Transverse colon (tissue), 4 donors: ENCODE measurements at regions of chr1 and their contacts with region 1.

Region 1: DNA sequence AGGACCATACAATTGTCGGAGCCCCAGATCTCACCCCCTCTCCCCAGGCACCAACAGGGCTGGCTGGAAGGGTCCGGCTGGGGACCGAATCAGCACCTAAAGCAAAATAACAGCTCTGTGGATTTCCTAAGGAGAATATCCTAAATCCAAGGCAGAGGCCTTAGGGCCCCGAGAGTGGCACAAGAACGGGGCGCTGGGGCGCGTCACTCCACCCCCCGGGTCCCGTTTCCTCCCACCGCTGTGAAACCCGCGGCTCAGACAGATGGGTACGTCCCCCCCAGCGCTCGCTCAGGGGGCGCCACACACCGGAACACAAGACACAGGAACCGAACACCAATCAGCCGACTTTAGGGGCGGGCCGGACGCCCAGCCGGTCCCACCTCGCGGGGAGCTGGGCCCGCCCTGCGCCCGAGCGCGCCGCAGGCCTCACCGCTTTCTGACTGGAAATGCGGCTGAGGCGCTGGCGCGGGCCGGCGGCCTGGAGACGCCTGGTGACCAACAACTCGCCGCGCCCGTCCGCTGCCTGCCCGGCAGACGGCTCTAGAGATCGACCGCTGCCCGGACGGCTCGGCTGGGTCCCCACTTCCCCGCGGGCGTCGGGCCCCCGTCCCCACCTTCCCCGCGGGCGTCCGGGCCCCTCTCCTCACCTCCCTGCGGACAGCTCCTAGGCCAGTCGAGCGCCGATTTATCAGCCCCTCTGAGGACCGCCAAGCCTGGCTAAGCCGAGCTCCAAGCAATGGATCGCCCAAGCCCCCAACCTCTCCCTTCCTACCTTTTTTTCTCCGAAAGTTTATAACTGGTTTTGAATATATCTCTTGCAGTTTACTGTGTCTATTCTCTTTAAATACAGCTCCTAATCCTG is at the start of gene HFM1:
- DNase-seq: peak; percentile 61
- H3K4me3 ChIP-seq: peak within 1 kb of the TSS; percentile 37 to 57 (median 54)
- H3K27ac ChIP-seq: peak within 1 kb of the TSS; percentile 70 to 87 (median 76)
- H3K4me1 ChIP-seq: peaks cover 0 to 12% (median 0%) of the 10 kb centered on the region in 4 donors
- H3K27me3 ChIP-seq: peaks cover 35% of the 10 kb centered on the region
- CTCF ChIP-seq: no peak
- EP300 ChIP-seq: no peak
- POLR2A ChIP-seq: no peak
- total RNA-seq, gene HFM1: 0.14 to 30.7 (median 0.95) TPM in 3 of 4 donors, not detected in the other

Region 2: DNA sequence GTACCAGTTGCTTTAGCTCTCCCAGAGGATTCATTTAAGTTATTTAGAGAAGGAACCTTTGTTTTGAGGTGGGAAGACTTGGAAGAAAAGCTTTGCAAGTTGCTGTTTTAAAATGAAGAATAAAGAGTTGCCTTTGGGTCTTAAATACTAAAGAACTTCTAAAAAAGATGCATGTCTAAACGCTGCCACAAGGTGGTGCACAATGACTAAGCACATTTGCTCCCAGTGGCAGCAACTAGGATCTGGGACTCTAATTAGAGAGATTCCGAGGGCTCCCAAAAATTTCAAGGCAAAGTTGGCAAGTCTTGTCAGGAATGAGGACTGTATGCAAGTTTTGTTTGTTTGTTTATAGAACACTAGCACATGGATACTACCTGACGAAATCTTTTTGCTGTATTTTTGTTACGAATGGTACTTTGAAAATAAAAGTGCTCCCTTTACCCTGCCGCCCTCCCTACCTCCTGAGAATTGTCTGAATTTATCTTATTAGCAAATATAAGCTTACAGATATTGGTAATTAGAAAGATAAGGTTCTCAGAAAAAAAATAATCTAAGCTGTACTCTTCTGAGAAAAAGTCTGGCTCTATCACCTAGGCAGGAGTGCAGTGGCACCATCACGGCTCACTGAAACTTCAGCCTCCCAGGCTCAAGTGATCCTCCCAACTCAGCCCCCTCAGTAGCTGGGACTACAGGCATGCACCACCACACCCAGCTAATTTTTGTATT is 121.5 kb before region 1 on chr1:
- in situ Hi-C with region 1: no loop called
- intact Hi-C with region 1: loop called (anchors 10 kb)
- DNase-seq: peak; percentile 43
- H3K4me3 ChIP-seq: peak overlapping the region in 1 of 4 donors; percentile 15
- H3K27ac ChIP-seq: no peak overlapping the region
- H3K4me1 ChIP-seq: no peaks in the 10 kb centered on the region
- H3K27me3 ChIP-seq: no peaks in the 10 kb centered on the region
- CTCF ChIP-seq: peak; percentile 67 to 83 (median 78)
- EP300 ChIP-seq: no peak
- POLR2A ChIP-seq: no peak

Region 3: GRCh38 chr1:91500756-91501522 is 96.6 kb after region 1 on chr1 and contains the start of gene CDC7:
- in situ Hi-C with region 1: no loop called
- intact Hi-C with region 1: loop called (anchors 10 kb)
- DNase-seq: peak; percentile 91
- H3K4me3 ChIP-seq: peak within 1 kb of the TSS; percentile 60 to 77 (median 68)
- H3K27ac ChIP-seq: peak within 1 kb of the TSS; percentile 80 to 92 (median 88)
- H3K4me1 ChIP-seq: peaks cover 3 to 21% (median 14%) of the 10 kb centered on the region in 4 donors
- H3K27me3 ChIP-seq: no peaks in the 10 kb centered on the region
- CTCF ChIP-seq: peak in 4 of 5 experiments; percentile 24 to 48 (median 25)
- EP300 ChIP-seq: no peak
- POLR2A ChIP-seq: no peak
- total RNA-seq, gene CDC7: 0.68 to 2.8 (median 1.3) TPM in 3 of 4 donors, not detected in the other